Esophagus muscularis mucosa (tissue), 4 donors: ENCODE measurements at regions of chr1 and their contacts with region 1.

Region 1: DNA sequence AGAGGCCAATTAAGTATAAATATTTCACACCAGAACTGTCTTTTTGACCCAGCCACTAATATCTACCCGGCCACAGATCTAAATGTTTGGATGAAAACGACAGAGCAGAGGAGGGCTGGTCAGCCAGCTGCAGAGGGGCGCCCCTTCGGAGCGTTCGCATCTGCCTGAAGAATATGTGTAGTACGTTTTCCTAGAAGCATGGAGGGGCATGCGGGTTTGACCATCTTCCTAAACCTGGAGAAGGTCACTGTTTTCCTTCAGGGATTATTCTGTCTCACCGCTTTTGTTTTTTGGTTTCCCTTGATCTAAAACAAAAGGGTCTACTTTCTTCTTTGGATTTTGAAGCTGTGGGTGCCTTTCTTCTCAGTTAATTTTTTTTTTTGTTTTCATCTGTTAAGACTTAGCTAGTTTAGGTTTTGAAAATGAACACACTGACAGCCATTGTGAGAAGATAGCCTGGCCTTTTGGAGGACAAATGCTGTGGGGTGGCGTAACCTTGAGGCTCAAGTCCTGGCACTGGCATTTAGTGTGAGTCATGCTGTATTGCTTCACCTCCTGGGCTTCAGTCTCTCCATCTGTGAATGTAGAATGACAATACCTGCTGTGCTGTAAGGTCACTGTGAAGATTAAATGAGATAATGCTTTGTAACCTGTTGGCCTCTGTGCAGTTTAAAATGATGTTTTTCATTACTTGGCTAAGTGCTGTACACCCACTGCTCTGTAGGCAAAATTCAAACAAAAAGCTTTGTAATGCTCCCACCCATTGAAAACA is 74.1 kb upstream of the IRF2BP2 start:
- DNase-seq: peak; percentile 82
- H3K4me3 ChIP-seq: no peak overlapping the region
- H3K27ac ChIP-seq: peak overlapping the region; percentile 75 to 85 (median 80)
- H3K4me1 ChIP-seq: peaks cover 12 to 34% (median 27%) of the 10 kb centered on the region in 4 donors
- H3K27me3 ChIP-seq: no peaks in the 10 kb centered on the region
- CTCF ChIP-seq: no peak
- EP300 ChIP-seq: no peak
- POLR2A ChIP-seq: no peak

Region 2: GRCh38 chr1:234386122-234386521 is 297.9 kb before region 1 on chr1:
- intact Hi-C with region 1: no loop called
- DNase-seq: peak; percentile 29
- H3K4me3 ChIP-seq: no peak overlapping the region
- H3K27ac ChIP-seq: no peak overlapping the region
- H3K4me1 ChIP-seq: no peaks in the 10 kb centered on the region
- H3K27me3 ChIP-seq: no peaks in the 10 kb centered on the region
- CTCF ChIP-seq: no peak
- EP300 ChIP-seq: no peak
- POLR2A ChIP-seq: no peak

Region 3: GRCh38 chr1:234617131-234617985 is 66.7 kb before region 1 on chr1:
- intact Hi-C with region 1: loop called (anchors 5 kb)
- DNase-seq: no peak
- H3K4me3 ChIP-seq: no peak overlapping the region
- H3K27ac ChIP-seq: peak overlapping the region; percentile 1 to 66 (median 56)
- H3K4me1 ChIP-seq: peaks cover 24 to 68% (median 55%) of the 10 kb centered on the region in 4 donors
- H3K27me3 ChIP-seq: no peaks in the 10 kb centered on the region
- CTCF ChIP-seq: no peak
- EP300 ChIP-seq: no peak
- POLR2A ChIP-seq: no peak